ENCODE measurements at regions of chr17 and their contacts with region 1.

Region 1: GRCh38 chr17:69448431-69449102 is 34.1 kb downstream of the MAP2K6 start:
- DNase-seq: peak; percentile 41 to 67
- ATAC-seq: peak; percentile 31 to 65 (median 52)
- H3K4me3 ChIP-seq: peak overlapping the region; percentile 58
- H3K27ac ChIP-seq: peak overlapping the region; percentile 72
- H3K4me1 ChIP-seq: peaks cover 49% of the 10 kb centered on the region
- H3K27me3 ChIP-seq: no peaks in the 10 kb centered on the region
- CTCF ChIP-seq: no peak

Region 2: DNA sequence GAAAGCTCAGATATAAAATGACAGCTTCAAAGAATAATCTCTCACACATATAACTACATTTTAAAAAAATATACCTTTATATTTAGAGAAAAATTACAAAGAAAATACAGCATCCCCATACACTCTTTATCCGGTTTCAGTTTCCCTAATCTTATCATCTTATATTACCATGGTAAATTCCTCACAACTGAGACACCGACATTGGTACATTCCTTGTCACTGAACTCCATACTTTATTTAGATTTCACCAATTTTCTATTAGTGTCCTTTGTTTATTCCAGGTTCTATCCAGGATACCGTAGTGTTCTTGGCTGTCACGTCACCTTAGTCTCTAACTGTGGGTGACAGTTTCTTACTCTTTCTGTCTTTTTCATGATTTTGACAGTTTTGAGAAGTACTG is 197.9 kb before region 1 on chr17:
- intact Hi-C with region 1: no loop called
- DNase-seq: no peak
- ATAC-seq: peak in 3 of 4 donors; percentile 27 to 32 (median 30)
- H3K4me3 ChIP-seq: no peak overlapping the region
- H3K27ac ChIP-seq: no peak overlapping the region
- H3K4me1 ChIP-seq: no peaks in the 10 kb centered on the region
- H3K27me3 ChIP-seq: no peaks in the 10 kb centered on the region
- CTCF ChIP-seq: no peak

Region 3: GRCh38 chr17:69414408-69415274 is 33.9 kb before region 1 on chr17 and contains the start of gene MAP2K6:
- intact Hi-C with region 1: loop called in 1 of 2 experiments (anchors 5 kb)
- DNase-seq: peak; percentile 83 to 92
- ATAC-seq: peak; percentile 91 to 94 (median 94)
- H3K4me3 ChIP-seq: peak within 1 kb of the TSS; percentile 76
- H3K27ac ChIP-seq: peak within 1 kb of the TSS; percentile 91
- H3K4me1 ChIP-seq: peaks cover 41% of the 10 kb centered on the region
- H3K27me3 ChIP-seq: no peaks in the 10 kb centered on the region
- CTCF ChIP-seq: no peak
- total RNA-seq, gene MAP2K6: 32.1 to 102 (median 46.3) TPM

Region 4: GRCh38 chr17:69485901-69486643 is 37.5 kb after region 1 on chr17:
- intact Hi-C with region 1: loop called (anchors 5 kb)
- DNase-seq: no peak
- ATAC-seq: peak; percentile 15 to 40 (median 25)
- H3K4me3 ChIP-seq: peak overlapping the region; percentile 42
- H3K27ac ChIP-seq: peak overlapping the region; percentile 82
- H3K4me1 ChIP-seq: peaks cover 42% of the 10 kb centered on the region
- H3K27me3 ChIP-seq: no peaks in the 10 kb centered on the region
- CTCF ChIP-seq: no peak

Measured in psoas muscle (tissue), 8 donors.